Activated CD4-positive, alpha-beta T cell treated with anti-CD3 and anti-CD28 coated beads, Interleukin-2, amount 10 ng/mL, durations not matched to agents 24 days and 14 days (primary cell): ENCODE measurements at regions of chr14 and their contacts with region 1.

Region 1: DNA sequence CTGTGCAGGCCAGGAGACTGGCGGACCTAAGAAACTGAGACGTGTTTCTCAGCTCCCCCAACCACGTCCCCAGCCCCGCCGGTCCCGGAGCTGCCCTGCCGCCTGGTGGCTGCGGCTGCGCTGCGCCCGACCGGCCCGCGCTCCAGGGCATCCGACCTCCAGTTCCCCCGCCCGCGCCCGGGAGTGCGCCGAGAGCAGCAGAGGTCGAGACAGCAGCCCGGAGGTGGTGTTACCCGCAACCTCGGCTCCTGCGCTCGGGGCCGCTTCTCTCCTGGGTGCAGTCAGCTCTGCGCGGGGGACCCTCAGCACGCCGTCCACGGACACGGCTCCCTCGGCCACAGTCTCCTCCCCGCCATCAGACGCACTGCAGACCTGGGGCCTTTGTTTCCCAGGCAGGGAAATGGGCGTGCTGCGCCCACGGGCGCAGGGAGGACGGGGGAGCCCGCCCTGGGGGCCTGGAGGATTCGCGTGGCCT is 21.6 kb upstream of the GPR132 start:
- DNase-seq: peak; percentile 94
- H3K4me3 Mint-ChIP-seq: peak overlapping the region; percentile 81
- H3K27ac Mint-ChIP-seq: no peak overlapping the region
- H3K4me1 Mint-ChIP-seq: peaks cover 11% of the 10 kb centered on the region
- H3K27me3 Mint-ChIP-seq: peaks cover 19% of the 10 kb centered on the region

Region 2: DNA sequence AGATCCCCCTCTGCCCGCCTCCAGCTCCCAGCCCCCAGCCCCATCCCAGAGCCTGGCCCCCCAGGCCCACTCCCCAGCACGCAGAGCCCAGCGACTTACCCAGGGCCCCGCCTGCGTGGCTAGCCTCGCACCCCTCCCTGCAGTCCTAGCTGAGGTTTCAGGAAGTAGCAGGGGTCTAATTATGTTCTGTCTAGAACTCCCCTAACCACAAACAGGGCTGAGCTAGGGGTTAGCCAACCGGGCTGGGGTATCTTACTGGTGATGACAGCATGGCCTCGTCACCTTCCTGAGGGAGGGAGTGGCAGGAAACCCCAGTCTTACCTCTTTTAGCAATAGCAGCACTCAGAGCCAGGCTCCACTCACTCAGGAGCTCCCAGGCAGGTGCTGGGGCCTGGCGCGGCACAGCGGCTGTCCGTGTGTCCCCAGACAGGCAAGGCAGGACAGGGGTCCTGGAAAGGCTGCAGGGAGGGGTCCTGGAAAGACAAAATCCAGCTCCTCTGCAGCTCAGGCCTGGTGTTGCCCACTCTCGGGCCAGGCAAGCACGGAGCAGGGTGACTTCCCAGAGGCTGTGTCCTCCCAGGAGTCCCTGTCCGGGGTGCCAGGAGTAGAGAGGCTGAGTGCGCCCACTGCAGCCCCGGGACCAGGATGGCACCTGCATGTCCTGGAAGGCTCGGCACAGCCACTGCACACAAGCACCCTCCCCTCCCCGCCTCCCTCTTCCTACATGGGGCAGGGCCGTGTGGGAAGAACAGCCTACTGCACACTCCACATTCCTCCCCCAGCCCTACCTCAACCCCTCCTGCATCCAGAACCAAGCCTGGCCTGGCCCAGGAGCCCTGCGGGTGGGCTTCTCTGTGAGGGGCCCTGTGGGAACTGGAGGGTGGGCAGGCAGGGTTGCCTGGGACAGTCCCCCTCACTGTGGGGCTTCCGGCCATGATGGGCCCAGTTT is 21.3 kb before region 1 on chr14 and contains the start of gene GPR132:
- intact Hi-C with region 1: loop called (anchors 2 kb)
- DNase-seq: peak; percentile 97
- H3K4me3 Mint-ChIP-seq: peak within 1 kb of the TSS; percentile 92
- H3K27ac Mint-ChIP-seq: peak within 1 kb of the TSS; percentile 90
- H3K4me1 Mint-ChIP-seq: peaks cover 59% of the 10 kb centered on the region
- H3K27me3 Mint-ChIP-seq: no peaks in the 10 kb centered on the region
- total RNA-seq, gene GPR132: 25.8 and 31.5 TPM in 2 replicates

Region 3: GRCh38 chr14:105168979-105169507 is 82.2 kb after region 1 on chr14:
- intact Hi-C with region 1: loop called (anchors 5 kb)
- DNase-seq: peak; percentile 84
- H3K4me3 Mint-ChIP-seq: peak overlapping the region; percentile 78
- H3K27ac Mint-ChIP-seq: no peak overlapping the region
- H3K4me1 Mint-ChIP-seq: peaks cover 8% of the 10 kb centered on the region
- H3K27me3 Mint-ChIP-seq: peaks cover 19% of the 10 kb centered on the region

Region 4: DNA sequence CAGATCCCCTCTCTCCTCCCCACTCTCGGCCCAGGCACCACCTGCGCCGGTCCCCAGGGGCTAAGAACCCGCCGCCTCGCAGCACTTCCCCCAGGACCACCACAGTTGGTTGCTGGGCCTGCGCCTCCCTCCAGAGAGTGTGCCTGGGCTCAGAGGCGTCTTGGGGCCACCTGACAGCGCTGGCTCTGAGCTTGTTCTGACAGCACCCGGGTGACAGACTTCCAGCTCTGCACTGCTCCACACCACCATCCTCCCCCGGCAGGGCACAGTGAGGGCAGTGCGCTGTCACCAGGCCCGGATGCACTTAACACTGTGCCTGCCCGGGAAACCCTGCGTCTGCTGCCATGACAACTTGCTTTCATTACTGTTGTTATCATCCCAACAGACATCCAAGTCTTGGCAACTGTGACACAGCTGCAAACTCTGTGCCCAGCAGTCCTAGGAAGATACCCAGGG is 207.3 kb after region 1 on chr14:
- intact Hi-C with region 1: loop called (anchors 5 kb)
- DNase-seq: peak; percentile 94
- H3K4me3 Mint-ChIP-seq: peak overlapping the region; percentile 80
- H3K27ac Mint-ChIP-seq: peak overlapping the region; percentile 99
- H3K4me1 Mint-ChIP-seq: peaks cover 43% of the 10 kb centered on the region
- H3K27me3 Mint-ChIP-seq: no peaks in the 10 kb centered on the region

Region 5: DNA sequence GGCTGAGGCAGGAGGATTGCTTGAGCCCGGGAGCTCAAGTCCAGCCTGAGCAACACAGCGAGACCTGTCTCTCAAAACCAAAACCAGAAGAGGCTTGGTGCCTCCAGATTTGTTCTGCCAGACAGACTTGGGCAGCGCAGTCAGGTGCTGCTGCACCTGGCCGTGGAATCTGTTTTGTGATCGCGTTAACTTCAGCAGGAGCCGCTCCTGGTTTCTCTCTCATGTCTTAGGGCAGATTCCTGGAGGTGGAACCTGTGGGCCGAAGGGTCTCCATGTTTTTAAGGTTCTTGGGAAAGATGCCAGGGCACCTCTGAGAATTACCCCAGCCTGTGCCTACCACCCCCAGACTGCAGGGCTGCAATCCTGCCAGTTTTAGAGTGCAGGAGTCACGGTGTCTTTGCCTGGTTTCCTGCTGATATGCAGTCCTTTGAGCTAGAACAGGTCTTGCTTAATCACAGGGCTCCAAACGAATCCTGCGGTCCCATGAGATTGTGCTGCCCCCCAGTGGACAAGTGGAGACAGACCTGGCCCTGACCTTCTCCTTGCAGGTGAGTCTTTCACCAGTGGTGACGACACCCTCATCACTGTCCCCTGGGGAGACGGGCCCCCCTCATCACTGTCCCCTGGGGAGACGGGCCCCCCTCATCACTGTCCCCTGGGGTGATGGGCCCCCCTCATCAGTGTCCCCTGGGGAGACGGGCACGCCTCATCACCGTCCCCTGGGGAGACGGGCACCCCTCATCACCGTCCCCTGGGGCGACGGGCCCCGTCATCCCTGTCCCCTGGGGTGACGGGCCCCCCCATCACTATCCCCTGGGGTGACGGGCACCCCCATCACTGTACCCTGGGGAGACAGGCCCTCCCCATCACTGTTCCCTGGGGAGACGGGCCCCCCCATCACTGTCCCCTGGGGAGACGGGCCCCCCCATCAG is 265.3 kb after region 1 on chr14:
- intact Hi-C with region 1: loop called (anchors 1 kb)
- DNase-seq: peak; percentile 96
- H3K4me3 Mint-ChIP-seq: no peak overlapping the region
- H3K27ac Mint-ChIP-seq: no peak overlapping the region
- H3K4me1 Mint-ChIP-seq: peaks cover 2% of the 10 kb centered on the region
- H3K27me3 Mint-ChIP-seq: no peaks in the 10 kb centered on the region